Endothelial cell of umbilical vein (primary cell): ENCODE measurements at regions of chr2 and their contacts with region 1.

Region 1: DNA sequence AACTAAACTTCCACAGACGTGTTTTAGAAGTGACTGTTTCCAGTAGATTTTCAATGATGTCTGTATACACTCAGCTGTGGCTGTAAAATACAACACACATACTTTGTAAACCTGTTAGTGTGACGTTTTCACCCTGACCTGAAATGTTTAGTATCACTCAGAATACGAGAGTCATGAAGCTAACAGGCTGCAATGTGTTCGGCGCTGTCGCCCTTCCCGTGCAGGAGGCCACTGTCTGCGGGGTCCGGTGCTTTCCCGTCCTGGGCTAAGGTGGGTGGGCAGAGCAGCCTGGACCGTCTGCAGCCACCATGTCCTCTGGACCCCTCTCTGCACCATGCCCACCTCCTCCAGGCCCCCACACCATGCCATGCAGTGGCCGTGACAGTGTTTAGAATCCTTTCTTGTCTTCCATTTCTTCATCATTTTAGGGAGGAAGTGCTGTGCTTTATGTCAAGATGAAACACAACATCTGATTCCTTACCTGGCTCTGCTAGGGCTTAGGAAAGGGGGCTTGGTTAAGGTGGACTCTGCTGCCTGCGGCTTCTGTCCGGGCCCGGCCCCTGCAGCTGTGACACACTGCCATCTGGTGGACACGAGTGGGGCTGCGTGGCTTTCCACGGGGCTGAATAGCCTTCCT is 53.8 kb upstream of the RBM44 start:
- DNase-seq: peak; percentile 86
- H3K4me3 ChIP-seq: no peak overlapping the region
- H3K27ac ChIP-seq: peak overlapping the region; percentile 80
- H3K4me1 ChIP-seq: peaks cover 21% of the 10 kb centered on the region
- H3K27me3 ChIP-seq: no peaks in the 10 kb centered on the region
- CTCF ChIP-seq: peak; percentile 96 to 97
- POLR2A ChIP-seq: peak; percentile 31

Region 2: DNA sequence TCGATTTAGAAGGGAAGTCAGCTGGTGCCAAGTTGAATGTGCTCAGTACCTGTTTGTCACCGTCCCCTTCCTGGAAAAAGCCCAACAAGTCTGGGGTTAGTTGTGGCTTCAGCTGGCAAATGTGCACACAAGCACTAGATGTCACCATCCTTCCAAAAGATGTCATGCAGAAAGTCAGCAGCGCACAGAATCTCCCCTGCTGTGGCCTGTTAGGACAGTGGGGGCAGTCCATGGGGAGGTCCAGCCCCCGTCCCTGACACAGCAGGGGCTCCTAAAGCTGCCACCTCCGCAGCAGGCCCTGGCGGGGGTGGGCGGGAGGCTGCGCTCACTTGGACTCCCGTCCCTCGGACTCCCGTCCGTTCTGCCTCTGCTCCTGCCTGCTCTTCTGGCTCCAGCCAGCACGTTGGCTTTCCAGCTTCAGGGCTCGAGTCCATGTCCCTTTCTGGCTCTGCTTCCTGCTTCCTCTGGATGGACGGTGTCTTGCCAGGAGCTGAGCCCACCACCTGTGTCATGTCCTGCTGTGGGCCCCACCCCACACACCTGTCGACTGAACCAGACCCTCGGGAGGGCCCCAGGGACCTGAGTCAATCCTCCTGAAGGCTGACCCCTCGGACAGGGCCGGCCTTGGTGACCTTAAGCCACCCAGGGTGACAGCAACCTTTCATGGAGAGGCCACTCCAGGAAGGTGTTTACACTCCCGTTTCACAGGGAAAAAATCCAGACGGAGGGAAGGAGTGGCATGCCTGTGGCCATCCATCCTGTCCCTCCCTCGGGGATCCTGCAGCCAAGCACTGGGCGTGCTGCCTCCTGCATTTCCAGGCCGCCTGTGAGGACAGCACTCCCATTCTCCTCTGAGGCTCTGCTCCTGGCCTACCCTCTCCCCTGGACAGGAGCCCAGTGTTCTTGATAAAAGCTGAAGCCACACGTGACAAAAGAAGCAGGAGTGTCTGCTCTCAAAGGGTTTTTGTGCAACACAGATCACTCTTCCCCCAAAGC is 162.7 kb before region 1 on chr2:
- CTCF ChIA-PET with region 1: interaction called, 103 read pairs
- POLR2A ChIA-PET with region 1: no interaction called
- dilution Hi-C with region 1: no loop called
- intact Hi-C with region 1: loop called (anchors 1 kb)
- DNase-seq: peak; percentile 79
- H3K4me3 ChIP-seq: no peak overlapping the region
- H3K27ac ChIP-seq: no peak overlapping the region
- H3K4me1 ChIP-seq: no peaks in the 10 kb centered on the region
- H3K27me3 ChIP-seq: peaks cover 2% of the 10 kb centered on the region in 2 experiments
- CTCF ChIP-seq: peak; percentile 55 to 61
- POLR2A ChIP-seq: no peak

Region 3: DNA sequence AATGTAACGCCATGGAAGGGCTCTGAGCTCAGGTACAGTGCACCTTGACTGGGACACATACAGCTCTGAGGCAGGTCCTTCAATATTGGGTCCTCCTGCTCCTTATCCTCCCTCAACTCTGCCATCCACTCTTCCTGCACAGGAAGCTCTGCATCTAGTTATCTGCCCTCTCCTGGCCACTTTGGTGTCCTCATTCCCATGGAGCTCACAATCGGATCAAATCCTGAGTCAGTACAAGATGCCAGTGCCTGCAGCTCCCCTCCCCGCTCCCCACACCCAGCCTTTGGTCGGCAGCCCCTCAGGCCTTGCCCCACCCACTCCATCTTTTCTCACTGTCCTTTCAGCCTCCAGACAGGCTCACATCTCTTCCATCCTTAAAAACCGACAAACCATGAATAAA is 59.3 kb before region 1 on chr2:
- CTCF ChIA-PET with region 1: interaction called, 38 read pairs
- POLR2A ChIA-PET with region 1: no interaction called
- dilution Hi-C with region 1: no loop called
- intact Hi-C with region 1: no loop called
- DNase-seq: no peak
- H3K4me3 ChIP-seq: no peak overlapping the region
- H3K27ac ChIP-seq: no peak overlapping the region
- H3K4me1 ChIP-seq: peaks cover 27% of the 10 kb centered on the region
- H3K27me3 ChIP-seq: no peaks in the 10 kb centered on the region
- CTCF ChIP-seq: peak; percentile 20 to 27
- POLR2A ChIP-seq: no peak

Region 4: GRCh38 chr2:237700512-237701032 is 44.2 kb before region 1 on chr2:
- CTCF ChIA-PET with region 1: interaction called, 28 read pairs
- POLR2A ChIA-PET with region 1: no interaction called
- dilution Hi-C with region 1: no loop called
- intact Hi-C with region 1: loop called (anchors 1 kb)
- DNase-seq: peak; percentile 85
- H3K4me3 ChIP-seq: no peak overlapping the region
- H3K27ac ChIP-seq: peak overlapping the region; percentile 52
- H3K4me1 ChIP-seq: peaks cover 86% of the 10 kb centered on the region
- H3K27me3 ChIP-seq: no peaks in the 10 kb centered on the region
- CTCF ChIP-seq: no peak
- POLR2A ChIP-seq: no peak

Region 5: DNA sequence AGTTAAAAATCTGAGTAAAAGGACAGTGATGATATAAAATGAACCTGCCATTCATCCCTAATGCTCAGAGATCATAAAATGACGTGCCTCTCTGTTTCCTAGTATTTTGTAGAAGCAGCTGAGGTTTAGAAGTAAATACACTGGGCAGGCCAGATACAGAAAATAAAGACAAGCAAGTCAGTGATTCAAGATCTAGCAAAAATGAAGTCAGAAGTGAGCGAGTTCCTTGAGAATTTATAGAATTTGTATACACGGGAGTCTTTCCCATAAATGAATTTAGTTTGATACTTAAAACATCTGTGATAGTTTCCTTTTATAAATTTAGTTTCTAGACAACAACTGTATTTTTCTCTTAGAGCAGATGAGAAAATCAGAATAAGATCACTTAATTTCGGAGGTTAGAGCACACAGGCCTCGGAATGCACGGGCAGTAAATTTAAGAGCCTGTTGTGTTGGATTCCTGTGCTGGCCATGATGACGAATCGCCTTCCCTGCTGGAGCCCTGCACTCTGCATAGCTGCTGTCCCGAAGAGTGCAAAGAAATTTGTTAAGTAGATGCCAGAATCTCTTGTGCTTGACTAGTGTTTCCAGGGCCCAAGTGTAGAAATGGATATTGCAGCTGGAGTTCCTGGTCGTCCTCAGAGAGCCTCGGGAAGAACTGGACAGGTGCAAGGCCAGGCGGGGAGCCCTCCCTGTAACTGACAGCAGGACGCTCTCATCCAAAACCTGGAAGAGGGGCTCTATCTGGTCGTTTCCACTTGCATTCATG is 29.9 kb before region 1 on chr2:
- CTCF ChIA-PET with region 1: interaction called, 15 read pairs
- POLR2A ChIA-PET with region 1: no interaction called
- dilution Hi-C with region 1: no loop called
- intact Hi-C with region 1: no loop called
- DNase-seq: peak; percentile 60
- H3K4me3 ChIP-seq: peak overlapping the region in 1 of 3 experiments; percentile 34
- H3K27ac ChIP-seq: peak overlapping the region; percentile 57
- H3K4me1 ChIP-seq: peaks cover 26% of the 10 kb centered on the region
- H3K27me3 ChIP-seq: no peaks in the 10 kb centered on the region
- CTCF ChIP-seq: no peak
- POLR2A ChIP-seq: no peak

Region 6: GRCh38 chr2:237731663-237732062 is 13.1 kb before region 1 on chr2:
- CTCF ChIA-PET with region 1: interaction called, 51 read pairs
- POLR2A ChIA-PET with region 1: no interaction called
- dilution Hi-C with region 1: no loop called
- intact Hi-C with region 1: loop called (anchors 1 kb)
- DNase-seq: peak; percentile 78
- H3K4me3 ChIP-seq: no peak overlapping the region
- H3K27ac ChIP-seq: peak overlapping the region; percentile 10
- H3K4me1 ChIP-seq: peaks cover 67% of the 10 kb centered on the region
- H3K27me3 ChIP-seq: no peaks in the 10 kb centered on the region
- CTCF ChIP-seq: no peak
- POLR2A ChIP-seq: no peak

Region 7: DNA sequence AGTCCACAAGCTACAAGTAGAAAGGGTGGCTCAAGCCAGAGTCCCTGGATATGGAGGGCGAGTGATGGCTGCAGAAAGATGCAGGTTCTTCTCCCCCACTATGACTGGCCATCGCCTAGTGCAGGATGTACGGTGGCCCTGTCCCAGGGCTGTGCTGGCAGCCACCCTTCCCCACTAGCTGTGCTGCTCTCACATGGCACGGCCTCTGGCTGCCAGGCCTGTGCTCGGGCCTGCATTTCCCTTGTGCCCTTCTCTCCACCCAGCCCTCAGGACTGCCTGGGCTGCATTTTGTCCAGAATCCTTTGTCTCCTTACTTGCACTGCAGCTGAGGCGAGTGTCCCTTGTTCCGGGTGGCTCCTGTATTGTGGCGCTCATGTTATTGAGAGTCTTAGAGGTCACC is 113.1 kb after region 1 on chr2:
- CTCF ChIA-PET with region 1: no interaction called
- POLR2A ChIA-PET with region 1: no interaction called
- dilution Hi-C with region 1: no loop called
- intact Hi-C with region 1: no loop called
- DNase-seq: no peak
- H3K4me3 ChIP-seq: no peak overlapping the region
- H3K27ac ChIP-seq: no peak overlapping the region
- H3K4me1 ChIP-seq: no peaks in the 10 kb centered on the region
- H3K27me3 ChIP-seq: peaks cover 37 to 45% of the 10 kb centered on the region in 2 experiments
- CTCF ChIP-seq: no peak
- POLR2A ChIP-seq: no peak